Activated naive CD4-positive, alpha-beta T cell treated with anti-CD3 and anti-CD28 coated beads for 36 hours (primary cell): ENCODE measurements at regions of chr14 and their contacts with region 1.

Region 1: GRCh38 chr14:89767861-89768268 is 186.7 kb downstream of the EFCAB11 start:
- DNase-seq: peak; percentile 86
- H3K4me3 Mint-ChIP-seq: peak overlapping the region; percentile 26
- H3K27ac Mint-ChIP-seq: peak overlapping the region; percentile 74
- H3K4me1 Mint-ChIP-seq: peaks cover 31% of the 10 kb centered on the region
- H3K27me3 Mint-ChIP-seq: no peaks in the 10 kb centered on the region

Region 2: GRCh38 chr14:89027097-89027740 is 740.6 kb before region 1 on chr14:
- CTCF ChIA-PET with region 1: no interaction called
- intact Hi-C with region 1: loop called (anchors 5 kb)
- DNase-seq: peak; percentile 50
- H3K4me3 Mint-ChIP-seq: peak overlapping the region; percentile 59
- H3K27ac Mint-ChIP-seq: no peak overlapping the region
- H3K4me1 Mint-ChIP-seq: no peaks in the 10 kb centered on the region
- H3K27me3 Mint-ChIP-seq: peaks cover 50% of the 10 kb centered on the region

Region 3: GRCh38 chr14:89178802-89179535 is 588.9 kb before region 1 on chr14:
- CTCF ChIA-PET with region 1: interaction called, 8 read pairs
- intact Hi-C with region 1: loop called (anchors 1 kb)
- DNase-seq: no peak
- H3K4me3 Mint-ChIP-seq: no peak overlapping the region
- H3K27ac Mint-ChIP-seq: no peak overlapping the region
- H3K4me1 Mint-ChIP-seq: peaks cover 9% of the 10 kb centered on the region
- H3K27me3 Mint-ChIP-seq: no peaks in the 10 kb centered on the region

Region 4: DNA sequence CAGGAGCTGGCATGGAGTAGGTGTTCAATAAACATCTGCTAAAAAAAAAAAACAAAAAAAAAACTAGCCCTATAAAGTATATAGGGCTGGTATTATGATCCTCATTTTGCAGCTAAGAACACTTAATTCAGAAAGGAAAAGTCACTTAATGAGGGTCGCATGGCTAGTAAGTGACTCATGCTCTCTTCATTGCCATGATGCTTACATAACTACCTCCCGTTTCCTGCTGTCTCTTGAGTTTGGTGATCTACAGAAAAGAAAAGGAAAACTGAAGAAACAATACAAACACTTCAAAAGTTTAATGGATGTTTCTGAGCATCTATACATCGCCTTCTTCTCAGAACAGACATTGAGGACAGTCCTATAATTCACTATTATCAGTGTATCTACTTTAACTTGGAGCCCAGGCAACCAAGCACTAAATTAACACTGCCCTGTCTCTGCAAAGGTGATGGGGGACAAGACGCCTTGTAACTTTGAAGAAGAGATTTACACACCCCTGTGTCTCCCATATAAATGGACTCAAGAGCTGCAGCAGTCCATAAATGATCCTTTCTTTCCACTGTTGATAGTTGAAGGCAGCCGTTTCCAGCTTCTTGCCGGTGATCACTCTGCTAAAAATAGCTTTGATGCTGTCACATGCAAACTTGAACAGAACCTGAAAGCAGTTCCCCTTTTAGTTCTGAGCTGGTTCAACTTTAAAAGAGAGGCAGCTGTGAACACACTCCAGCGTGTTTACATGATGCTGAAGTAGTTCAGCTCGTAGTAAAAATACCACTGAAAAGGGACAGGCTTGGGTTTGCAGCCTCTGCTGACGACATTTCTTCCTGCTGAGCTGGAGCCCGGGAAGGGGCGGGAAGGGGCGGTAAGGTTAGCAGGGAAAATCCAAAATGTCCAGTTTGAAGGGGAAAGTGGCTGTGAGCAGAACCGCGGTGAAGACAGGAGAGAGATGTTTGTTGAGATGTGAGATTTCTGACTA is 464.1 kb before region 1 on chr14:
- CTCF ChIA-PET with region 1: interaction called, 4 read pairs
- intact Hi-C with region 1: loop called (anchors 2 kb)
- DNase-seq: peak; percentile 61
- H3K4me3 Mint-ChIP-seq: peak overlapping the region; percentile 62
- H3K27ac Mint-ChIP-seq: peak overlapping the region; percentile 92
- H3K4me1 Mint-ChIP-seq: peaks cover 67% of the 10 kb centered on the region
- H3K27me3 Mint-ChIP-seq: no peaks in the 10 kb centered on the region

Region 5: GRCh38 chr14:89720741-89721315 is 47.0 kb before region 1 on chr14:
- CTCF ChIA-PET with region 1: interaction called, 7 read pairs
- intact Hi-C with region 1: loop called (anchors 1 kb)
- DNase-seq: peak; percentile 76
- H3K4me3 Mint-ChIP-seq: peak overlapping the region; percentile 32
- H3K27ac Mint-ChIP-seq: peak overlapping the region; percentile 95
- H3K4me1 Mint-ChIP-seq: peaks cover 68% of the 10 kb centered on the region
- H3K27me3 Mint-ChIP-seq: no peaks in the 10 kb centered on the region

Region 6: DNA sequence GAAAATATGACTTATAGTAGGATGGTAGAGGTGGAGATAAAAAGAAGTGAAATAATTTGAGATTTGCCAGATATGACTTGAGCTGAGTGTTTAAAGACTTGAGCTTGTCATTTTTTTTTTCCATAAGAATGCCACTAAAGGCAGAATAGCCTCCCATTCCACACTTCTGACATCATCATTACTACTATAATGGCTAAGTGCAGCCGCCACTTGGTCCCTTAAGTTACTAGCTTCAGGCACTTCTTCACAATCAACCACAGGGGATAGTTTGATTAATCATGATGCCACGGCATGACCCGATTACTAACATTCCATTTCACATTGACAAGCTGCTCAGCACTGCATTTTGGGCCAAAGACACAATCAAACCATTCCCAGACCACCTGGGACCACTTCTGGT is 58.7 kb after region 1 on chr14:
- CTCF ChIA-PET with region 1: no interaction called
- intact Hi-C with region 1: no loop called
- DNase-seq: no peak
- H3K4me3 Mint-ChIP-seq: no peak overlapping the region
- H3K27ac Mint-ChIP-seq: no peak overlapping the region
- H3K4me1 Mint-ChIP-seq: no peaks in the 10 kb centered on the region
- H3K27me3 Mint-ChIP-seq: peaks cover 2% of the 10 kb centered on the region

Region 7: GRCh38 chr14:90039253-90040010 is 271.6 kb after region 1 on chr14:
- CTCF ChIA-PET with region 1: no interaction called
- intact Hi-C with region 1: no loop called
- DNase-seq: no peak
- H3K4me3 Mint-ChIP-seq: no peak overlapping the region
- H3K27ac Mint-ChIP-seq: no peak overlapping the region
- H3K4me1 Mint-ChIP-seq: peaks cover 9% of the 10 kb centered on the region
- H3K27me3 Mint-ChIP-seq: no peaks in the 10 kb centered on the region

Region 8: DNA sequence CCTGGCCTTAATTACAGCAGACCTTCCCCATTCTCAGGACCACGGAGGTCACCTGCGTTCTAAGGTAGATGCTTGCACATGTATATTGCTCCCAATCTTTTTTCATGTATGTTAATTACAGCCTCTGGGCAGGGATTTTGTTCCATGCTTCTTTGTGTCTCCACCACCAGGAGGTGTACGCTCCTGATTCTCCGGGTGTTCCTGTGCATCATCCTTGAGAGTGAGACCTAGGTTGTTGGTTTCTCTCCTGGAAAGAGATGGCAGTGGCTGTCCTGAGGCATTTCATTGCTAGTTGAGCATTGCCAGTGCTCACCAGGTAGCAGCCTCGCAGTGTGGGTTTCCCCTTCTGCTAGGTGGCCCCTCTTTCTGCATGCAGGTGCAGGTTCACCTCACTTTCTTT is 346.7 kb after region 1 on chr14:
- CTCF ChIA-PET with region 1: no interaction called
- intact Hi-C with region 1: no loop called
- DNase-seq: no peak
- H3K4me3 Mint-ChIP-seq: no peak overlapping the region
- H3K27ac Mint-ChIP-seq: no peak overlapping the region
- H3K4me1 Mint-ChIP-seq: no peaks in the 10 kb centered on the region
- H3K27me3 Mint-ChIP-seq: peaks cover 20% of the 10 kb centered on the region